Activated CD4-positive, alpha-beta memory T cell treated with anti-CD3 and anti-CD28 coated beads for 36 hours (primary cell): ENCODE measurements at regions of chr3 and their contacts with region 1.

Region 1: DNA sequence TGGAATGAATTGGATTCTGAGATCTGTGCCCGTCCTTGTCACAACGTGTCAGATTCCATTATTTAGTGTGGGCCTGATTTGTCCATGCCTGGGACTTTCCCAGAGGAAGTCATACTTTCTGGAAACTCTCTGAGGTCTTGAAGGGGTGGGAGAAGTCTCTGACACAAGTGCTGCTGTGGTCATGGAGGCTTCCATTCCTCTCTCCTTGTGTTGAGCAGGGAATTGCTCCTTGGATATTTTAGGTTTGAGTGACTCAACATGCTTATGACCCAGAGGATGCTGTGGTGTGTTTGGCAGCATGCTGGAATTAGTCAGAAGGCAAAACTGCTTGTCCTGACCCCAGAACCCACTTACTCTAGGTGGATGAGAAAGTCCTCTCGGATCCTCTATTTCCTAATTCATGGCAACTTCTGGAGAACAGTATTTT is 132.1 kb downstream of the LPP start:
- DNase-seq: peak; percentile 42
- H3K4me3 Mint-ChIP-seq: no peak overlapping the region
- H3K27ac Mint-ChIP-seq: peak overlapping the region; percentile 34
- H3K4me1 Mint-ChIP-seq: peaks cover 51% of the 10 kb centered on the region
- H3K27me3 Mint-ChIP-seq: no peaks in the 10 kb centered on the region

Region 2: DNA sequence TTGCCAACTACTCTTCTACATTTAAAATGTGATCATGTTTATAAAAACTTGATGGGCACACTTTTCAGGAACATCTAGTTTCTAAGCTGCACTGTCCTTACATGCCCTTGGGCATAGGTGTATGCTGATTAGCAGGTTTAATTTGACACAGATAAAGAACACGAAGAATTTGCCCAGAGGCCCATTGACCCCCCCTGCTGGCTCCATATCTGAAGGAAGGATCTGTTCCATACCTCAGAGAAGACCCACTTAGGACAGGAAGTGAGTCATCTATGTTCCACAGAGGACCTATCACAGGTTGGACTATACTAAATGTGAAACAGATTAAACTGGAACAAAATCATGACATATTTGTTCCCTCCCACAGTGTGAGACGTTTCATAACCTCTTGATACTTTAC is 225.0 kb before region 1 on chr3:
- CTCF ChIA-PET with region 1: no interaction called
- POLR2A ChIA-PET with region 1: no interaction called
- intact Hi-C with region 1: loop called (anchors 10 kb)
- DNase-seq: peak; percentile 81
- H3K4me3 Mint-ChIP-seq: peak overlapping the region; percentile 44
- H3K27ac Mint-ChIP-seq: peak overlapping the region; percentile 80
- H3K4me1 Mint-ChIP-seq: peaks cover 35% of the 10 kb centered on the region
- H3K27me3 Mint-ChIP-seq: no peaks in the 10 kb centered on the region

Region 3: GRCh38 chr3:188154014-188154808 is 131.9 kb before region 1 on chr3 and contains the start of gene LPP:
- CTCF ChIA-PET with region 1: no interaction called
- POLR2A ChIA-PET with region 1: interaction called, 3 read pairs
- intact Hi-C with region 1: loop called (anchors 5 kb)
- DNase-seq: peak; percentile 91
- H3K4me3 Mint-ChIP-seq: peak within 1 kb of the TSS; percentile 88
- H3K27ac Mint-ChIP-seq: peak within 1 kb of the TSS; percentile 97
- H3K4me1 Mint-ChIP-seq: peaks cover 63% of the 10 kb centered on the region
- H3K27me3 Mint-ChIP-seq: no peaks in the 10 kb centered on the region
- total RNA-seq, gene LPP: 41.0 to 43.6 TPM

Region 4: GRCh38 chr3:188257384-188258026 is 28.6 kb before region 1 on chr3:
- CTCF ChIA-PET with region 1: interaction called, 6 read pairs
- POLR2A ChIA-PET with region 1: interaction called, 16 read pairs
- intact Hi-C with region 1: loop called (anchors 1 kb)
- DNase-seq: no peak
- H3K4me3 Mint-ChIP-seq: no peak overlapping the region
- H3K27ac Mint-ChIP-seq: peak overlapping the region; percentile 47
- H3K4me1 Mint-ChIP-seq: peaks cover 49% of the 10 kb centered on the region
- H3K27me3 Mint-ChIP-seq: no peaks in the 10 kb centered on the region

Region 5: DNA sequence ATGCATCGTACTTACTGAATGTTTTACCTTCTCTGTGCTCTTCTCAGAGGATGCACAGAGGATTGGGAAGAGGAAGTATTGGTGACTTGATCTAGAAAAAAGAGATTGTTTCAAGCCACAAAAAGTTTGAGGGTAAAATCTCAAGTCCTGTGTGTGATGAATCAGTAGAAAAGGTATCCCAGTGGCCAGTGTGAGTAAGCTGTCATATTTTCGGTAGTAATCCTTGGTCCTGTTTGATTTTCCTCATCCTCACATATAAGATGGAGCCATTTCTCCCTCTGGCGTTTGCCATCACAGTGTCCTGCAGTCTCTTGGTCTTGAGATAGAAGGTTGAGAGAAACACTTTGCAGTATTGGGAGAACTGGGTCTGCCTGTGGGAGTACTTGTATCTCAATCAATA is 34.7 kb after region 1 on chr3:
- CTCF ChIA-PET with region 1: no interaction called
- POLR2A ChIA-PET with region 1: interaction called, 7 read pairs
- intact Hi-C with region 1: loop called (anchors 1 kb)
- DNase-seq: no peak
- H3K4me3 Mint-ChIP-seq: no peak overlapping the region
- H3K27ac Mint-ChIP-seq: no peak overlapping the region
- H3K4me1 Mint-ChIP-seq: peaks cover 58% of the 10 kb centered on the region
- H3K27me3 Mint-ChIP-seq: peaks cover 2% of the 10 kb centered on the region

Region 6: GRCh38 chr3:188400494-188401243 is 114.6 kb after region 1 on chr3:
- CTCF ChIA-PET with region 1: no interaction called
- POLR2A ChIA-PET with region 1: no interaction called
- intact Hi-C with region 1: no loop called
- DNase-seq: peak; percentile 48
- H3K4me3 Mint-ChIP-seq: no peak overlapping the region
- H3K27ac Mint-ChIP-seq: peak overlapping the region; percentile 4
- H3K4me1 Mint-ChIP-seq: peaks cover 68% of the 10 kb centered on the region
- H3K27me3 Mint-ChIP-seq: no peaks in the 10 kb centered on the region

Region 7: DNA sequence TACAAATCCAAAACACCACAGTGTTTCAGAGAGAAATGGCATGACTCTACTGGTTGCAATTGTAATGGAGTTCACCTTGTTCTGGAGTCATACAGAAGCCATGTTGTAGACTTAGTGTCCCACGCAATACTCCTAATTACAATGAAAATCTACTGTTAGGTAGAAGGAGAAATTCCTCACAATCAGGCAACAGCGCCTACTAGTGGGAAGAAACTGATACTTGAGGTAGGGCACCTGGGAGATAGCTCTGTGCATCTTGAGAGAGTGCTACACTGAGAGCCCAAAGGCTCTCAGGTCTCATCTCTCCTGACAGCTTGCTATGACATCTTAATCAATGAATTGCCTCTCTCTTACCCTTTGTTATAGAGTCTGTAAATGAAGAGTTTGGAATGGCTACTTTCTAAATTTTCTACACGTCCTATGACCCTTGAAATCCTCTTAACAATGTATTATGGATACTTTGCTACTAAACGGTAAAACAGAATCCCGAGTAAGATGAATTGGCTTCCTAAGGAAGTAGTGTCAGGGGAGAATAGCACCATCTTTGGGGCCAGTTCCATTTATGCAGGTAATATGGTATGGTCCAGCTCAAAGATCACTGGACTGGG is 463.0 kb after region 1 on chr3:
- CTCF ChIA-PET with region 1: no interaction called
- POLR2A ChIA-PET with region 1: no interaction called
- intact Hi-C with region 1: loop called (anchors 1 kb)
- DNase-seq: peak; percentile 56
- H3K4me3 Mint-ChIP-seq: no peak overlapping the region
- H3K27ac Mint-ChIP-seq: no peak overlapping the region
- H3K4me1 Mint-ChIP-seq: peaks cover 29% of the 10 kb centered on the region
- H3K27me3 Mint-ChIP-seq: no peaks in the 10 kb centered on the region